ENCODE measurements at regions of chr11 and their contacts with region 1.

Region 1: DNA sequence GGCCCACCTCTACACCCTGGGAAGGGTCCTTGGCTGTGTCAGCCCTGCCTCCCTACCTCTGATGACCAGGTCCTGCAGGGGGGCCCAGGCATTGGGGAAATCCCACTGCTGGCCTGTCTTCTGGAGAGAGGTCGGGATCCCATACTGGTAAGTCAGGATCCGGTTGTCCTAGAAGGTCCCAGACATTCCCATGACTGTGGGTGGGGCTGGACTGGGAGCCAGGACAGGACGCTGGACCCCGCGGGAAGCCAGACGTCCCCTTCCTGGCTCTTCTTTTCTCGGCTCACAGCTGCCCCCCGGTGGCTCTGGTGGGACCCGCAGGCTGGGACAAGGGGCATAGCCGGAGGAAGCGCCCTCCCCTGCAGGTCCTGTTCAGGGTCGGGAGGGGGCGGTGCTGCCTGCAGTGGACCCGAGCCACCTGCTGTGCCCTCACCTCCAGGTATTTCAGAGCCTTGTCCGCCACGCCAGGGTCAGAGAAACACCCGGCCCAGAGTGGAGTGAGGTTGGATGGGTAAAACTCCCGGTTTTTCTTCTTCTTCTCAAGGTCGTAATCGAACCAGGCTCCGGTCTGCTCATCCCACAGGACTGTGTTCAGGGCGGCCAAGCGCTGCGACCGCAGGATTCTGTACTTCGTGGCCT is 20.0 kb downstream of the TREH start:
- DNase-seq: no peak
- H3K4me3 ChIP-seq: no peak overlapping the region
- CTCF ChIP-seq: peak; percentile 98

Region 2: GRCh38 chr11:118547132-118547531 is 112.3 kb before region 1 on chr11:
- CTCF ChIA-PET with region 1: no interaction called
- POLR2A ChIA-PET with region 1: no interaction called
- DNase-seq: no peak
- H3K4me3 ChIP-seq: no peak overlapping the region
- CTCF ChIP-seq: no peak

Region 3: GRCh38 chr11:118592616-118593367 is 66.6 kb before region 1 on chr11:
- CTCF ChIA-PET with region 1: interaction called, 47 read pairs
- POLR2A ChIA-PET with region 1: no interaction called
- DNase-seq: no peak
- H3K4me3 ChIP-seq: no peak overlapping the region
- CTCF ChIP-seq: no peak

Region 4: DNA sequence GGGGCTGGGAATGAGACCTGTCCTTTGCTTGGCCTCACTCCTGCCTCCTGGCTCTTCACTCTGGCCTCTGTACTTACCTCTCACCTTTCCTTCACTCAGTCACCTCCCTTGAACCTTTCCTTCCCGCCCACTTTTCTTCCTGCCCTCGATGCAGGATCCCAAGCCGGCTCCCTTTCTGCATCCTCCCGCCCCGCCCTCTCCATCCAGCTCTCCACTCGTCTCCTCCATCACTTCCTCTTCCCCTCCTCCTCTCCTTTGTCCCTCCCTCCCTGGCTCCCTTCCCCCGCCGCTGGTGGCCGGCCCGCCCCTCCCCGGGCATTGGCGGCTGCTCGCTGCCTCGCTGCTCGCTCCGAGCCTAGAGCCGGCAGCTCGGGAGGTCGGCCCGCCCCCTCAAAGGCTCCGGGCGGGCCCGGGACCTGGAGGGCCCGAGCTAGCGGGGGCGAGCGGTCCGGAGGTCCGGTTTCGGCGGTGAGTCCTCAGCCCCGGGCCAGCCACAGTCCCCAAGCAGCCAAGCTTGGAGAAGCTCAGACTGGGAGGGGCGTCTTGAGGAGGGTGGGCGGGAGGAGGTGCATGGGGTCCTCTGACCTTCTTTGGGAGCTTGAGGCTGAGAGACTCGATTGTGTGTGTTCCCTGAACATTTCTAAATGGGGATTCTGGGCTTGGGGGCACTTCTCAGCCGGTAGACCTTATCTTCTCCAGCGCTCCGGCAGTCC is 38.2 kb before region 1 on chr11:
- CTCF ChIA-PET with region 1: interaction called, 10 read pairs
- POLR2A ChIA-PET with region 1: interaction called, 4 read pairs
- DNase-seq: peak; percentile 40
- H3K4me3 ChIP-seq: peak overlapping the region; percentile 78
- CTCF ChIP-seq: no peak

Region 5: GRCh38 chr11:118641397-118642270 is 17.8 kb before region 1 on chr11:
- CTCF ChIA-PET with region 1: interaction called, 40 read pairs
- POLR2A ChIA-PET with region 1: interaction called, 3 read pairs
- DNase-seq: no peak
- H3K4me3 ChIP-seq: no peak overlapping the region
- CTCF ChIP-seq: no peak

Region 6: GRCh38 chr11:118703563-118704106 is 44.2 kb after region 1 on chr11:
- CTCF ChIA-PET with region 1: no interaction called
- POLR2A ChIA-PET with region 1: no interaction called
- DNase-seq: no peak
- H3K4me3 ChIP-seq: no peak overlapping the region
- CTCF ChIP-seq: no peak

Region 7: GRCh38 chr11:118956094-118956846 is 296.8 kb after region 1 on chr11 and contains the start of gene UPK2:
- CTCF ChIA-PET with region 1: interaction called, 75 read pairs
- POLR2A ChIA-PET with region 1: no interaction called
- DNase-seq: no peak
- H3K4me3 ChIP-seq: no peak within 1 kb of the TSS
- CTCF ChIP-seq: peak; percentile 98

Measured in AG04449 (cell line).